ENCODE measurements at regions of chr5 and their contacts with region 1.

Region 1: DNA sequence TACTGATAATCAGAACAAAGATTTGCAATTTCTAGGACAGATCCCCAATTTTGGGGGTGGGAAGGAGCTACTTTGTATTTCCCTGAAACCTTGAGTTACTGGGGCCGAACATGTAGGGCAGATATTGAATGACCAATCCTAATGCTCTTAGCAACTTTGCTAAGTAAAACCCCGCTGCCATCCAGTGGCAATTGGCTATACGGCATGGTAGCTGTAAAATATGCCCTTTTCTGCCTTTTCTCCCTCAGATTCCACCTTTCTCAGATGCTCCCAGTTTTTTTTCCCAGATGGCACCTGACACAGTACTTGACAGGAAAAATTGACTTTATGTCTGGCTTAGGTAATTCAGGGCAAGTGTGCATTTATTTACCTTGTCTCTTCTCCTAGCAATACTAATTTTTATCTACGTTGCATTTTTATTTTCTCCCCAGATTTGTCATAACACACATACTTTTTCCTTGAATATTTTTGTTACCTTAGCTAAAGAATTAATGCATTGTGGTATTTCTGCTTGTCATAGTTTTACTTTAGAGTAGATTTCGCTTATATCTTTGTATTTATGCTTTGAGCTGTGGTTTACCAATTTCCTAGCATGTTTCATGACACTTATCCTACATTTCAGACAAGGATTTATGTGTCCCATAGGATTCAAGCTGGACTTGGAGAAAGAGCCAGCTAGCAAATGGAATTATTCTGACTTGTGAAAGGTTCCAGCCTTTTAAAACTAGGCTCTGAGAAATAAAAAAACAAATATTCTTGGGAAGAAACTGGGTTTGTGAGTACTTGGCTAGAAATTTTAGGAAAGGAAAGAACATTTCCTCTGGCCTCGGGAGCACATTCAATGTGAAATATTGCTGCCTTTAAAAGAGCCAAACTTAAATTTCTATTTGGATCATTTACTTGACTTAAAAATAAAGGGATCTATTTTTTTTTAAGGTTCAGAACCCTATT is 37.4 kb downstream of the PIK3R1 start:
- DNase-seq: no peak
- H3K4me3 Mint-ChIP-seq: no peak overlapping the region
- H3K27ac Mint-ChIP-seq: no peak overlapping the region
- H3K4me1 Mint-ChIP-seq: peaks cover 89% of the 10 kb centered on the region
- H3K27me3 Mint-ChIP-seq: peaks cover 2% of the 10 kb centered on the region

Region 2: GRCh38 chr5:67246108-67246507 is 1006.8 kb before region 1 on chr5:
- intact Hi-C with region 1: loop called (anchors 1 kb)
- DNase-seq: no peak
- H3K4me3 Mint-ChIP-seq: no peak overlapping the region
- H3K27ac Mint-ChIP-seq: no peak overlapping the region
- H3K4me1 Mint-ChIP-seq: no peaks in the 10 kb centered on the region
- H3K27me3 Mint-ChIP-seq: no peaks in the 10 kb centered on the region

Region 3: DNA sequence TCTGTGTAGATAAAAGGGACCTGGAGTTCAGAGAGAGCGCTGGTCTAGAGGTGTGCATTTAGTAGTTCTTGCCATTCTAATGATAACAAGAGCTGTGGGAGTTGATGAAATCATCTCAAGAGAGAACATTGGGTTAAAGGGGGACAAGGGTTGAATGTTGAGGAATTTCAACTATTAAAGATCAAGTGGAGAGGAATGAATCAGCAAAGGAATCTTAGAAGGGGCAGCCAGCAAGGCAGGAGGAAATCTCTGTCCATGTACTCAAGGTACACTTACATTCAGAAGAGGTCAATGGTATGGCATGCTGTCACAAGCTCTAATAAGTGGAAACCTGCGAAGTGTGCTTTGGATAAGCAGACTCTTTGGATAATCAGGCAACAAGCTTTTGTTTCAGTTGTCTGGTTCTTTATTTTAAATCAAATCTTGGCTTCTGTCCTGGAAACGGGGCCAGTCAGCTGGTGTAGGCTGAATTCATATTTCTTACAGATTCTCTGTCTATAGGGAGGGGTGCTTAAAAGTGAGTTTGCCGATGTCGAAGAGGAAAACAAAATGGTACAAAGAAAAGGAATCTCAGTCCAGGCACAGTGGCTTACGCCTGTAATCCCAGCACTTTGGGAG is 735.9 kb before region 1 on chr5:
- intact Hi-C with region 1: loop called (anchors 10 kb)
- DNase-seq: no peak
- H3K4me3 Mint-ChIP-seq: no peak overlapping the region
- H3K27ac Mint-ChIP-seq: no peak overlapping the region
- H3K4me1 Mint-ChIP-seq: peaks cover 49% of the 10 kb centered on the region
- H3K27me3 Mint-ChIP-seq: peaks cover 7% of the 10 kb centered on the region

Region 4: GRCh38 chr5:67957374-67957773 is 295.6 kb before region 1 on chr5:
- intact Hi-C with region 1: no loop called
- DNase-seq: no peak
- H3K4me3 Mint-ChIP-seq: no peak overlapping the region
- H3K27ac Mint-ChIP-seq: no peak overlapping the region
- H3K4me1 Mint-ChIP-seq: no peaks in the 10 kb centered on the region
- H3K27me3 Mint-ChIP-seq: peaks cover 2% of the 10 kb centered on the region

Region 5: DNA sequence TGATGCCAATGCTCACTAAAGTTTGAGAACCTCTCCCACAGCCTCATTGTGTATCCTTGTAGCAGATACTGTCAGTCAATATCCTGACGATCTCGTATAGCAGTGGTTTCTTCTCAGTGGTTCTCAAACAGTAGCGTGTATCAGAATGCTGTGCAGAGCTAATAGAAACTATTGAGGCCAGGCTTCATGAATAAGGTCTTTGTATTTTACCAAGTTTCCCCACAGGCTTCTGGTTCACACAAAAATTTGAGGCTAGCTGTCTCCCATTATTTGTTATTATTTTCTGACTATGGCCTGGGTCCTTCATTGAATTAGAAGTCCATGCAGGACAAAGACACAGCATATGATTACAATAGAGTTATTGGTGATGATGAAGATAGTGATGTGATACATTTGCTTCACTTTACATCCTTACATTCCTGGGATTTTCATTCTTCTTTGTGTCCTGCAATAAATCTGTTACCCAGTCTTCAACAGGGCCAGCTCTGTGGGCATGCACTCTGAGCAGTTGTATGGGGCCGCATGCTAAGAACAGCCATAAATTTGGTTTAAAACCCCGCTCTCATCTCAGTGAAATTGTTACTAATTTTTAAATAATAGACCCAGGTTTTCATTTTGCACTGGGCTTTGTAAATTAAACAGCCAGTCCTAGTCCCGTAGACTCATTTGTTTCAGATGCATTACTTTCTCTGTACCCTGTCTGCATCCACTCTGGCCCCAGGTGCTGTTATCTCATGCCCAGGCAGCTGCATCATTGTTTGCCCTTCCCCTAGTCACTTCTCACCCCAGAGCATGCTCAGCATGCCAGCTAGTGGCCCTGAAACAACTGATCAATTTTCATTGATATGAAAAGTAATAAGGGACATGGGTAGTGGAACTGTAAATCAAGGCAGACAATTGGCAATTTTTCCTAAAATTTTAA is 237.3 kb before region 1 on chr5:
- intact Hi-C with region 1: no loop called
- DNase-seq: no peak
- H3K4me3 Mint-ChIP-seq: no peak overlapping the region
- H3K27ac Mint-ChIP-seq: no peak overlapping the region
- H3K4me1 Mint-ChIP-seq: no peaks in the 10 kb centered on the region
- H3K27me3 Mint-ChIP-seq: no peaks in the 10 kb centered on the region

Region 6: GRCh38 chr5:68070591-68071281 is 182.2 kb before region 1 on chr5:
- intact Hi-C with region 1: loop called (anchors 10 kb)
- DNase-seq: no peak
- H3K4me3 Mint-ChIP-seq: no peak overlapping the region
- H3K27ac Mint-ChIP-seq: no peak overlapping the region
- H3K4me1 Mint-ChIP-seq: no peaks in the 10 kb centered on the region
- H3K27me3 Mint-ChIP-seq: no peaks in the 10 kb centered on the region

Region 7: DNA sequence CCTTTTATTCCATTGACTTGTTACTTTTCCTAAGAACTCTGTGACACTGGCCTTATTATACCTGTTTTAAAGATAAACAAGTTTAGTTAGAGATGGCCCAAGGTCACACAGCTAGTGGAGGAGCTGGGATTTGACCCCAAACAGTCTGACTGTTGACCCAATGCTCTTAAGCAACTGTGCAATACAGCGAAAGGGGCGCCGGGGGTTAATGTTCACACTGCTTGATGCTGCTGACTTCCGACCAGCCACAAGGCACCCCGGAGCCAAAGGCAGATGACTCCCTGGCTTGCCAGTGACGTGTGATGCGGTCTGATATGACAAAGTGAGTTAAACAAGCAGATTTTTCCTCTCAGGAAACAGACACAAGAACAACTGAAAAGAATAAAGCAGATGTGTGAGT is 13.5 kb before region 1 on chr5:
- intact Hi-C with region 1: loop called (anchors 1 kb)
- DNase-seq: peak; percentile 69
- H3K4me3 Mint-ChIP-seq: peak overlapping the region; percentile 60
- H3K27ac Mint-ChIP-seq: peak overlapping the region; percentile 93
- H3K4me1 Mint-ChIP-seq: peaks cover 68% of the 10 kb centered on the region
- H3K27me3 Mint-ChIP-seq: no peaks in the 10 kb centered on the region

Region 8: DNA sequence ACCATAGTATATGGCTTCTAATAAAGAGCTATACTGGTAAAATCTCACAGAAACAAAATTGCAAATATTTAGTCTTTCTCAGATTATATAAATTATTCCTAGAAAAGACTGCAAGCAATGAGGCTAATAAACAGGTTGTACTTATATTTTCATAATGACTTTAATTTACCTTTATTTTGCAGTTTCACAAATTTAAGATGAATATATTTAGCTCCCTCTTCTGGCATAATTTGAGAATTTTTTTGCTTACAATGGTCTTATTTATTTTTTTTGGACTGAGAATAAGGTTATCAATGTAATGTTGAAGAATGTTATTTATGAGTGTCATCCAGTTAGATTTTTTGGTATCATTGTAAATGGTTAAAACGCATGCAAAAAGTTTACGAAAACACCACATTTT is 19.3 kb after region 1 on chr5:
- intact Hi-C with region 1: no loop called
- DNase-seq: no peak
- H3K4me3 Mint-ChIP-seq: no peak overlapping the region
- H3K27ac Mint-ChIP-seq: no peak overlapping the region
- H3K4me1 Mint-ChIP-seq: peaks cover 81% of the 10 kb centered on the region
- H3K27me3 Mint-ChIP-seq: no peaks in the 10 kb centered on the region

Region 9: GRCh38 chr5:68745448-68745847 is 492.5 kb after region 1 on chr5:
- intact Hi-C with region 1: no loop called
- DNase-seq: no peak
- H3K4me3 Mint-ChIP-seq: no peak overlapping the region
- H3K27ac Mint-ChIP-seq: no peak overlapping the region
- H3K4me1 Mint-ChIP-seq: no peaks in the 10 kb centered on the region
- H3K27me3 Mint-ChIP-seq: no peaks in the 10 kb centered on the region